Left ventricle myocardium superior (tissue), 1 donor: ENCODE measurements at regions of chr13 and their contacts with region 1.

Region 1: DNA sequence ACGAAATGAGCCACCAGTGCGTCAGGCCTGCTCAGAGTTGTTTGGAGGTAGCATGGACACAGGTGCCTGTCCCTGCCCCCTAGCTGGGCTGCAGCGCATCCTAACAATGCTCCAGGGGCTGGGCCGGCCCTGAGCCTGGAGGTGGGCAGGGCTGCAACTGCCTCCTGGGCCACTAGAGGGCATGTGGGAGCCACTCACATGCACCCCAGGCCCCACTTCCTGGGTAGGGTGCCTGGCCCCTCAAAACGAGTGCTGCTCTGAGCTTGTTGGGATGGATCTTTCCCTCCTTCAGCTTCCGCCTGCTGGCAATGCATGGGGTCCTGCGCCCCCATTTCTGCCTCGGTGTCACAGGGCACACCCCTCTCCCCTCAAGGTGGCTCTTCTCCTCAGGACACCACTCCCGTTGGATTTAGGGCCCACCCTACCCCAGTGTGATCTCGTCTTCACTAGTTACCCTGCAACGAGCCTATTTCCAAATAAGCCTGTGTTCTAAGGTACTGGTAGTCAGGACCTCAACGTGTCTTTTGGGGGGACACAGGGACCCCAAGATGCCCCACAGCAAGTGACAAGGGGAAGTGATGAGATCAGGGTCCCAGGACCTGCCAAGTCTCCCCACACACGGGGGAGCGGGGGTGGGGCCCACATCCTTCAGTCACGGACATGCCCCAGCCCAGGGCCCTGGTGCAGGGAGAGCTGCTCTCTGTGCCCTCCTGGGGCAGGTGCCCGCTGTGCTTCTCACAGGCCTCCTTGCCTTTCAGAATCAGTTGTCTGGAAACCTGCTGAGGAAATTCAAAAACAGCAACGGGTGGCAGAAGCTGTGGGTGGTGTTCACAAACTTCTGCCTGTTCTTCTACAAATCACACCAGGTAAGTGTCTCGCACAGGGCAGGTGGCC is 131.3 kb downstream of the STK24 start:
- DNase-seq: peak; percentile 86
- ATAC-seq: peak; percentile 86

Region 2: GRCh38 chr13:98609756-98610155 is 164.2 kb after region 1 on chr13:
- intact Hi-C with region 1: no loop called
- DNase-seq: no peak
- ATAC-seq: no peak

Region 3: DNA sequence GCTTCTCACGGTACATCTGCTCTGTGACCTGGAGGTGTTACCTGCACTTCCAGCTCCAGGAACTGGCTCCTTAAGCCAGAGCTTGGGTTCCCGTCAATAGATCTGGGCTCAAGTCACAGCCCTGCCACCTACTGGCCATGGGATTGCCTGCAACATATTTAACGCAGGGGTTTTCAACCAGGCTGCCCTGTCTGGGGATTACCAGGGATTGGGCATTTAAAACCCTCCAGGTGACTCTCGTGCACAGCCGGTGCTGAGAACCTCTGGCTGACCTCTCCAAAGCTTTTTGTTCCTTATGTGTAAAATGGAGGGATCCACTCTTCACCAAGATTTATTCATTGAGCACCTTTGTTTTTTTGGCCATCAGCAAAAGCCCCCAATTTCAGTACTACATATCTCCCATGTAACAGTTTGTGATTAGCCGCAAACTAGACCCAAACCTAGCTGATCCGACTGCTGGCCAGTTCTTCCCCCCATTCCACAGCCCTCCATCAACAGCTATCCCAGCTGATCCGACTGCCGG is 207.9 kb after region 1 on chr13:
- intact Hi-C with region 1: loop called (anchors 10 kb)
- DNase-seq: peak; percentile 83
- ATAC-seq: peak; percentile 93

Region 4: DNA sequence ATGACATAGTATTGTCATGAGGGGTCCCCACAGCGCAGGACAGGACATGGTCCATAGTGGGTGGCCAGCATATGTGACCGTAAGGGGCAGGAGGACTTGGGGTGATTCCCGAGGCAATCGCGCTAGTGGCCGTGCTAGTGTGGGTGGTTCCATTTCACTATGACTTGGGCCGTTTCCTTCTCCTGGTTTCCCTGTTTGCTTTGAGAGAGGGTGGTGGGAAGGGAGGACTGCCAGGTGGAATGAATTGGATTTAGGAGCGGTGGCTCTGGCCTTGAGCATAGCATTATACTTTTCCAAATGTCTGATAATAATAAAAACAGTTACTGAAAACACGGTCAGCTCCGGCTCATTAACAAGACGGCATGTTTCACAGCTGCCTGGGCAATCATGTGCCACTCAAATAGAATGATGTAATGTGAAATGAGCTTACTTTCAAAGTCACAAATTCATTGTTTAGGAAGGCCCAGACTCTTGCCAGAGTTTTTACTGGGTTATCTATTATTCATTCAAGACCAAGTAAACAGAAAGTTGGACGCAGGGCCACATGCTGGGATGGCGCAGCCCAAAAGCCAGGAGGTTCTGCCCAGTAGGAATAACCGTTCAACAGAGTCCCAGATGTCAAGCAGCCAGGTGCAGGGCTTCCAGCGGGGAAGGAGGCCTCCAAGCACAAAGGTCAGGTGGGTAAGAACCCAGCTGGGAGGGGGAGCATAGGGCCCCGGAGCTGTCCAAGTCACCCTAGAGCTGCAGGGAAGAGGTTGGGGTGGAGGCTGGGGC is 326.4 kb after region 1 on chr13:
- intact Hi-C with region 1: no loop called
- DNase-seq: no peak
- ATAC-seq: no peak